WTC11 (cell line): ENCODE measurements at regions of chr3 and their contacts with region 1.

Region 1: GRCh38 chr3:150251187-150252062 is 156.7 kb upstream of the TSC22D2 start:
- DNase-seq: no peak
- ATAC-seq: peak; percentile 75
- H3K4me3 Mint-ChIP-seq: no peak overlapping the region
- H3K27ac Mint-ChIP-seq: no peak overlapping the region
- H3K4me1 Mint-ChIP-seq: peaks cover 31% of the 10 kb centered on the region
- H3K27me3 Mint-ChIP-seq: no peaks in the 10 kb centered on the region
- CTCF ChIP-seq: no peak

Region 2: DNA sequence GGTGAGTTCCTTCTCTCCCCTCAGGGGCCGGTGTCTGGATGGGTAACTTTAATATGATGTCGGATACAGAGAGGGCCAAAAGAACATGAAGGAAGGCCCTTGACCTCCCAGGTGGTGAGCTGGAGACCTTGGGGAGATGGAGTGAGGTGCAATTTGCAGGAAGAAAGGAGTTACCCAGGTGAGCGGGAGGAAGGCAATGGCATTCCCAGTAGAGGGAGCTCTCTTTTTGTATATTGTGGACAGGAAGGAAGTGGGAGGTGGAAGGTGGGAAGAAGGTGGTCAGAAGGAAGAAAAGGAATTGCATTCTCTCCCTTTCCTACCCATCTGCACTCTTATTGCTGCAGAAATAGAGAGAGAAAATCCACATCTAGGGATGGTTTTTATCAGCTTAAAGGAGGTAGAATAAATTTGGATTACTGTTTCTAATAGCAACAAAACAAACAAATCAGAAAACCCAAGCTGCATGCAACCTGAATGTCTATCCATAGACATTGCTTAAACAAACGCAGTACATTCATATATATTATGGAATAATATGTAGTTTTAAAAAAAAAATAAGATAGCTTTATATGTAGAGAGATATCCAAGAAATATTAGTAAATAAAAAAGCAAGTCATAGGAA is 12.3 kb before region 1 on chr3:
- CTCF ChIA-PET with region 1: interaction called, 22 read pairs
- POLR2A ChIA-PET with region 1: no interaction called
- DNase-seq: peak; percentile 44
- ATAC-seq: peak; percentile 92
- H3K4me3 Mint-ChIP-seq: no peak overlapping the region
- H3K27ac Mint-ChIP-seq: peak overlapping the region; percentile 79; the same call in 1 of the 2 replicates
- H3K4me1 Mint-ChIP-seq: peaks cover 28% of the 10 kb centered on the region
- H3K27me3 Mint-ChIP-seq: no peaks in the 10 kb centered on the region
- CTCF ChIP-seq: 0 out of 2 replicates have a peak, but pooled peaks have one; percentile 18

Region 3: GRCh38 chr3:150528354-150528797 is 277.0 kb after region 1 on chr3:
- CTCF ChIA-PET with region 1: no interaction called
- POLR2A ChIA-PET with region 1: no interaction called
- DNase-seq: no peak
- ATAC-seq: no peak
- H3K4me3 Mint-ChIP-seq: peak overlapping the region; percentile 40; the same call in 1 of the 2 replicates
- H3K27ac Mint-ChIP-seq: no peak overlapping the region
- H3K4me1 Mint-ChIP-seq: peaks cover 23% of the 10 kb centered on the region
- H3K27me3 Mint-ChIP-seq: no peaks in the 10 kb centered on the region
- CTCF ChIP-seq: no peak